ENCODE measurements at regions of chr7 and their contacts with region 1.

Region 1: GRCh38 chr7:8176370-8177081 is 85.4 kb downstream of the ICA1 start:
- DNase-seq: peak; percentile 74
- ATAC-seq: peak; percentile 85
- H3K4me3 Mint-ChIP-seq: peak overlapping the region; percentile 63
- H3K27ac Mint-ChIP-seq: peak overlapping the region; percentile 95
- H3K4me1 Mint-ChIP-seq: peaks cover 42% of the 10 kb centered on the region
- H3K27me3 Mint-ChIP-seq: no peaks in the 10 kb centered on the region

Region 2: DNA sequence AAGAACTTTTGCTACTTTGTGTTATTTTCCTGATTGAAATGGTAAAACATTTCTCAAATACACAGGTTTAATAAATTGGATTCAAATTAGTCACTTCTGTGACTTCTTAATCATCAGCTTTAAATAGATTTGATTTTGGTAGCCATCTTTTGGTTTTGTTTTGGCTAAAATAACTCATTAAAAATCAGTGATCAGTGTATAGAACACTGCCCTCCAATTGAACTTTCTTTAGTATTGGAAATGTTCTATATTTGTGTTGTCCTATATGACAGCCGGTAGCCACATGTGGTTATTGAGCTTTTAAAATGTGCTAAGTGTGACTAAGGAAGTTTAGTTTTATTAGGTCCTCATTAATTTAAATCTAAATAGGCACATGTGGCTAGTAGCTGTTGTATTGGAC is 157.6 kb before region 1 on chr7:
- CTCF ChIA-PET with region 1: no interaction called
- POLR2A ChIA-PET with region 1: no interaction called
- intact Hi-C with region 1: no loop called
- DNase-seq: no peak
- ATAC-seq: no peak
- H3K4me3 Mint-ChIP-seq: no peak overlapping the region
- H3K27ac Mint-ChIP-seq: no peak overlapping the region
- H3K4me1 Mint-ChIP-seq: peaks cover 42% of the 10 kb centered on the region
- H3K27me3 Mint-ChIP-seq: no peaks in the 10 kb centered on the region

Region 3: GRCh38 chr7:8125680-8126444 is 50.7 kb before region 1 on chr7:
- CTCF ChIA-PET with region 1: interaction called, 4 read pairs
- POLR2A ChIA-PET with region 1: interaction called, 3 read pairs
- intact Hi-C with region 1: loop called (anchors 1 kb)
- DNase-seq: peak; percentile 88
- ATAC-seq: peak; percentile 93
- H3K4me3 Mint-ChIP-seq: peak overlapping the region; percentile 62
- H3K27ac Mint-ChIP-seq: peak overlapping the region; percentile 95
- H3K4me1 Mint-ChIP-seq: peaks cover 81% of the 10 kb centered on the region
- H3K27me3 Mint-ChIP-seq: peaks cover 5% of the 10 kb centered on the region

Region 4: GRCh38 chr7:8134089-8134733 is 42.3 kb before region 1 on chr7:
- CTCF ChIA-PET with region 1: no interaction called
- POLR2A ChIA-PET with region 1: no interaction called
- intact Hi-C with region 1: loop called (anchors 1 to 2 kb)
- DNase-seq: peak; percentile 60
- ATAC-seq: peak; percentile 84
- H3K4me3 Mint-ChIP-seq: peak overlapping the region; percentile 22
- H3K27ac Mint-ChIP-seq: peak overlapping the region; percentile 79
- H3K4me1 Mint-ChIP-seq: peaks cover 56% of the 10 kb centered on the region
- H3K27me3 Mint-ChIP-seq: no peaks in the 10 kb centered on the region

Region 5: DNA sequence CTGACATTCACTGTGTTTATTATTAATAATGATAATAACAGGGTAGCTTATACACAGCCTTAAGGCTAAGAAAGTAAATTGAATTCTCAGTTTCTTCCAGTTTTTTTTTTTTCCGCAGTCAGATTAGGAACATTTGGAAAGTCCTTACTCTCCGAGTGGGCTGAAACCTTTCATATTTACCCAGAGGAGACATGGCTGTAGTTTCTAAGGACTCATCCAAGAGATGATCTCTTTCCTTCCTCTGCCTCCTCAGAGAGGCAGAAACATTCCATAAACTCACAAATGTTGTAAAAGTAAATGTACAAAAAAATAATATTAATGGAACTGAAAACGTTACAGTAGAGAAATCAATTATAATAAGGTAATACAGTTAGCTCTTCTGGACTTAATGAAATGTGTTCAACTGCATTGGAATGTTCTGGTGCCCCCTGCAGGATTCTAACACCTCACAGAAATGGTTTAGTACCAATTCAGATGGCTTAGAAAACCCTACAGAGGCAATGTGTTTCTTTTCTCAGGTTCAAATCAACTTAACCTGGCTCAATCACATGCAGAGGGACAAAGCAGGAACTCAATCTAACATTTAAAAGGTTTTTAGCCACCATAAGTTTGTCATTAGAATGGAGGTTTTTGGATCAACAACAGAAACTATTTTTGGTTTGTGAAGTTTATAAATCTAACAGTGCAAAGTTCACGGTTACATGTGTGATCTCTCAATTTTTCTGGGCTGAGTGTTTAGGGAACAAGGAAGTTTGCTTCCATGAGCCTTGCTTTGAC is 13.8 kb after region 1 on chr7:
- CTCF ChIA-PET with region 1: interaction called, 10 read pairs
- POLR2A ChIA-PET with region 1: no interaction called
- intact Hi-C with region 1: no loop called
- DNase-seq: peak; percentile 73
- ATAC-seq: peak; percentile 86
- H3K4me3 Mint-ChIP-seq: no peak overlapping the region
- H3K27ac Mint-ChIP-seq: no peak overlapping the region
- H3K4me1 Mint-ChIP-seq: peaks cover 8% of the 10 kb centered on the region
- H3K27me3 Mint-ChIP-seq: no peaks in the 10 kb centered on the region

Region 6: GRCh38 chr7:8413600-8413999 is 237.1 kb after region 1 on chr7:
- CTCF ChIA-PET with region 1: no interaction called
- POLR2A ChIA-PET with region 1: no interaction called
- intact Hi-C with region 1: no loop called
- DNase-seq: no peak
- ATAC-seq: no peak
- H3K4me3 Mint-ChIP-seq: no peak overlapping the region
- H3K27ac Mint-ChIP-seq: no peak overlapping the region
- H3K4me1 Mint-ChIP-seq: no peaks in the 10 kb centered on the region
- H3K27me3 Mint-ChIP-seq: peaks cover 18% of the 10 kb centered on the region